Posterior vena cava (tissue), 2 donors: ENCODE measurements at regions of chr6 and their contacts with region 1.

Region 1: GRCh38 chr6:24614043-24614420 is 32.0 kb downstream of the KIAA0319 start:
- DNase-seq: no peak

Region 2: DNA sequence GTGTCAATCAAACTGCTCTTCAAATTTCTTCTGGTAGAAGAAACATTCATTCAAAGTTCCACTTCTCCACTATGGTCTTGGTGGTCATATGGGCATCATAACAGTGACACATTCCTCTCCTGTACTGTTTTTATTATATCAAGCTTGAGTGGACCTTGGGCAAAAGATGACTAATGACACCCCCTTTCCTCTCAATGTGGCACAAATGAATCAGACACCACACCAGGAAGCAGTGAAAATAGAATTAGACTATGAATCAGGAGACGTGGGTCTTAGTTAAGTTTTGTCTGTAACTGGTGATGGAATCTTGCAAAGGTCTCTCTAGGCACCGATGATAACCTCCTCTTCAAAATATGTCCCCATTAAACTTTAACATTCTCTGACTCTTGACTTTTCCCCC is 497.0 kb before region 1 on chr6:
- intact Hi-C with region 1: no loop called
- DNase-seq: no peak

Region 3: DNA sequence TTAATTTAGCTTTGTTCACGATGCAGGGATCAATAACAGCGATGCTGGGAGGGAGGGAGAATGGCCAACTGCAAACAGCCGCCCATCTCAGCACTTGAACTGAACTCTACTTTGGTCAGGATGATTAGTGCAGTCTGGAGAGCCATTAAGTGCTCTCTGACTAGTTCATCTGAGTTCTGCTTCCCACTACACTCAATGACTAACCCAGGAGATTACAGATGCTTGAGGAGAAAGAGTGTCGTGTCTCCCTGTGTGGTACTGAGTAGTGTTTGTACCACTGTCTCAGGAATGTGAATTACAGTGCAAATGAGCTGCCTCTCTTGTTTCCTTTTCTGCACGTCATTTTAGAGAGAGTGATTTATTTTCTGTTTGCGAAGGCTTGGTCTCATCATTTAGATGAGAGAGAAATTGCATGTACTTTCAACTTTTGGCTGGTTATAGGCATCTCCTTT is 688.7 kb after region 1 on chr6:
- intact Hi-C with region 1: loop called in 1 of 2 experiments (anchors 5 kb)
- DNase-seq: no peak